ENCODE measurements at regions of chr15 and their contacts with region 1.

Region 1: GRCh38 chr15:76150971-76151598 is 91.3 kb downstream of the TMEM266 start:
- DNase-seq: peak in 1 of 2 donors; percentile 72
- ATAC-seq: peak; percentile 60 to 71
- H3K4me3 ChIP-seq: no peak overlapping the region
- H3K27ac ChIP-seq: peak overlapping the region; percentile 33 to 66 (median 62)
- H3K4me1 ChIP-seq: peaks cover 22 to 24% of the 10 kb centered on the region in 2 donors
- H3K27me3 ChIP-seq: no peaks in the 10 kb centered on the region
- CTCF ChIP-seq: peak; percentile 79 to 92 (median 87)
- POLR2A ChIP-seq: no peak

Region 2: GRCh38 chr15:76185716-76186115 is 34.6 kb after region 1 on chr15:
- in situ Hi-C with region 1: no loop called
- intact Hi-C with region 1: loop called (anchors 2 kb)
- DNase-seq: peak in 1 of 2 donors; percentile 60
- ATAC-seq: peak; percentile 9 to 34
- H3K4me3 ChIP-seq: no peak overlapping the region
- H3K27ac ChIP-seq: peak overlapping the region in 2 of 4 donors; percentile 19 to 98
- H3K4me1 ChIP-seq: peaks cover 11 to 50% of the 10 kb centered on the region in 2 donors
- H3K27me3 ChIP-seq: no peaks in the 10 kb centered on the region
- CTCF ChIP-seq: peak in 3 of 5 experiments; percentile 28 to 61 (median 44)
- POLR2A ChIP-seq: no peak

Region 3: GRCh38 chr15:76196269-76197231 is 45.5 kb after region 1 on chr15:
- in situ Hi-C with region 1: no loop called
- intact Hi-C with region 1: loop called (anchors 2 kb)
- DNase-seq: peak; percentile 80 to 92
- ATAC-seq: peak; percentile 71 to 73
- H3K4me3 ChIP-seq: no peak overlapping the region
- H3K27ac ChIP-seq: peak overlapping the region; percentile 93 to 96 (median 94)
- H3K4me1 ChIP-seq: peaks cover 51 to 58% of the 10 kb centered on the region in 2 donors
- H3K27me3 ChIP-seq: no peaks in the 10 kb centered on the region
- CTCF ChIP-seq: no peak
- POLR2A ChIP-seq: peak; percentile 37 to 39

Region 4: GRCh38 chr15:76330080-76330680 is 179.1 kb after region 1 on chr15:
- in situ Hi-C with region 1: no loop called
- intact Hi-C with region 1: loop called (anchors 5 kb)
- DNase-seq: peak in 1 of 2 donors; percentile 64
- ATAC-seq: peak; percentile 63 to 67
- H3K4me3 ChIP-seq: no peak overlapping the region
- H3K27ac ChIP-seq: no peak overlapping the region
- H3K4me1 ChIP-seq: peaks cover 4 to 14% of the 10 kb centered on the region in 2 donors
- H3K27me3 ChIP-seq: peaks cover 19 to 25% (median 24%) of the 10 kb centered on the region in 3 donors
- CTCF ChIP-seq: peak; percentile 42 to 63 (median 47)
- POLR2A ChIP-seq: no peak

Region 5: DNA sequence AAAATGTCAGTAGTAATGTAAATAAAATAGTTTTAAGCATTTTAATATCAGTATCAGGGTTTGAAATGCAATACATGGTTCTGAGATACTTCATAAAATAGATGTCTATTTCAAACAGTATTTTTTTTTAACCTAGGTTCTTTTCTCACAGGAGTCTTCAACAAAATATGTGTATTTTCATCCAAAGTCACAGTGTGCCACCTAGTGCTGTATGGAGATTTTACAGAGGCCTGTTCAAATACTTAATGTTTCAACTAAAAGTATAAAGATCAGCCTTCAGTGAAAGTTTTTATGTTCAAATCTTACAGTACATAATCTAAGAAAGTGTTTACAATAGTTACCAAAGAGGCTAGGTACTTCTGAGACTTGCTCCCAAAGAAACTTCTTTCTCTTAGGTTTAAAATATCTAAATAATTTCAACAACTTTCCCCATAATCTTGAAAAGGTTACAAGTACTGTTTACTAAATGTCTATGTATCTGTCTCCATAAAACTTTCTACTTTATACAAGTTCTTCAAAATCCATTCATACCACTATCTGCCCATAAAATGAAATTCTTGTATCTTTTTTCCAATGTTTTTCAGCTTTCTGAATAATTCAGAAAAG is 715.7 kb after region 1 on chr15:
- in situ Hi-C with region 1: no loop called
- intact Hi-C with region 1: loop called (anchors 10 kb)
- DNase-seq: no peak
- ATAC-seq: peak; percentile 57 to 61
- H3K4me3 ChIP-seq: no peak overlapping the region
- H3K27ac ChIP-seq: peak overlapping the region in 3 of 4 donors; percentile 24 to 67 (median 34)
- H3K4me1 ChIP-seq: peaks cover 21 to 22% of the 10 kb centered on the region in 2 donors
- H3K27me3 ChIP-seq: no peaks in the 10 kb centered on the region
- CTCF ChIP-seq: peak in 3 of 5 experiments; percentile 49 to 62 (median 53)
- POLR2A ChIP-seq: no peak

Measured in gastrocnemius medialis (tissue), 4 donors.